Activated B cell treated with CpG ODN at 0.5 μM for 24 hours (primary cell): ENCODE measurements at regions of chr7 and their contacts with region 1.

Region 1: GRCh38 chr7:135170274-135170997 is at the start of gene CYREN:
- DNase-seq: peak; percentile 85
- ATAC-seq: peak; percentile 76
- H3K4me3 Mint-ChIP-seq: peak within 1 kb of the TSS; percentile 92
- H3K27ac Mint-ChIP-seq: peak within 1 kb of the TSS; percentile 95
- H3K4me1 Mint-ChIP-seq: peaks cover 59% of the 10 kb centered on the region
- H3K27me3 Mint-ChIP-seq: no peaks in the 10 kb centered on the region
- CTCF ChIP-seq: no peak
- total RNA-seq, gene CYREN: 78.2 and 79.3 TPM in 2 replicates

Region 2: GRCh38 chr7:134632937-134633540 is 537.4 kb before region 1 on chr7:
- CTCF ChIA-PET with region 1: interaction called, 13 read pairs
- POLR2A ChIA-PET with region 1: interaction called, 10 read pairs
- intact Hi-C with region 1: loop called (anchors 1 kb)
- DNase-seq: no peak
- ATAC-seq: peak; percentile 71
- H3K4me3 Mint-ChIP-seq: no peak overlapping the region
- H3K27ac Mint-ChIP-seq: no peak overlapping the region
- H3K4me1 Mint-ChIP-seq: peaks cover 10% of the 10 kb centered on the region
- H3K27me3 Mint-ChIP-seq: peaks cover 14% of the 10 kb centered on the region
- CTCF ChIP-seq: no peak

Region 3: DNA sequence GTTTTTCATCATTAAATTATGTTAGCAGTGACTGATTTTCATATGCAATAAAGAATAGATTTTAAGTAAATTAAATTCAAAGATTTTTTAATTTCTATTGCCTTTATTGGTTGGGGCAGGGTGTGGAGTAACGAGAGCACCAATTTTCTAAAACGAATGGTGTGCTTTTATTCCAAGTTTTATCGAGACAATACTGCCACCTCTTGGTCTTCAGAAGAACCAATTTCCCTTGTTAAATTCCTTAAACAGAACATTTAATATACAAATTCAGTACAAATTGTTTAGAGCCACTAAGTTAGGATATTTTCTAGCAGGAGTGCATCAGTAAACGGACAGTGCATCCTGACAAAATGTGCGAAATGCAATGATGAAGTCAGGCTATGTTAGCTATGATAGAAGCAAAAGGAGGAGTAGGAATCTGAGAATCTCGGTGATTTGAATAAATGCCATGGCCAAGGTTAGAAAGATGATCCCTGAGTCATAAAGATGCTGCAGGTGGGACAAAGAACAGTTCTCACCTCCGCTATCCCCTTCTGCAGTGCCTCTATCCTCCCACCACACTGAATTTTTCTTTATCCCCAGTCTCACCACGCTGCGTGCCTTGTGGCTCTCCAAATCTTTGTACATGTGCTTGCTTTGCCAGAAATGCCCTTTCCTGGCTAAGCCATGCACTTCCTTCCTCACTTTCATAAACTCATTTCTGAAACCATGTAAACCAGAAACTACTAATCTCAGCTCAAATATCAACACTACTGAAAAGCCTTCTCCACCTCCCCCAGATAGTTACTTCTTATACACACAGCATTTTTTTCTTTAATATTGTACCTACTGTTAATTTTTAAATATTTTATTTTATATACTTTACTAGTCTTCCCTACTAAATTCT is 216.0 kb before region 1 on chr7:
- CTCF ChIA-PET with region 1: interaction called, 5 read pairs
- POLR2A ChIA-PET with region 1: no interaction called
- intact Hi-C with region 1: loop called (anchors 1 kb)
- DNase-seq: no peak
- ATAC-seq: no peak
- H3K4me3 Mint-ChIP-seq: no peak overlapping the region
- H3K27ac Mint-ChIP-seq: no peak overlapping the region
- H3K4me1 Mint-ChIP-seq: no peaks in the 10 kb centered on the region
- H3K27me3 Mint-ChIP-seq: no peaks in the 10 kb centered on the region
- CTCF ChIP-seq: no peak

Region 4: DNA sequence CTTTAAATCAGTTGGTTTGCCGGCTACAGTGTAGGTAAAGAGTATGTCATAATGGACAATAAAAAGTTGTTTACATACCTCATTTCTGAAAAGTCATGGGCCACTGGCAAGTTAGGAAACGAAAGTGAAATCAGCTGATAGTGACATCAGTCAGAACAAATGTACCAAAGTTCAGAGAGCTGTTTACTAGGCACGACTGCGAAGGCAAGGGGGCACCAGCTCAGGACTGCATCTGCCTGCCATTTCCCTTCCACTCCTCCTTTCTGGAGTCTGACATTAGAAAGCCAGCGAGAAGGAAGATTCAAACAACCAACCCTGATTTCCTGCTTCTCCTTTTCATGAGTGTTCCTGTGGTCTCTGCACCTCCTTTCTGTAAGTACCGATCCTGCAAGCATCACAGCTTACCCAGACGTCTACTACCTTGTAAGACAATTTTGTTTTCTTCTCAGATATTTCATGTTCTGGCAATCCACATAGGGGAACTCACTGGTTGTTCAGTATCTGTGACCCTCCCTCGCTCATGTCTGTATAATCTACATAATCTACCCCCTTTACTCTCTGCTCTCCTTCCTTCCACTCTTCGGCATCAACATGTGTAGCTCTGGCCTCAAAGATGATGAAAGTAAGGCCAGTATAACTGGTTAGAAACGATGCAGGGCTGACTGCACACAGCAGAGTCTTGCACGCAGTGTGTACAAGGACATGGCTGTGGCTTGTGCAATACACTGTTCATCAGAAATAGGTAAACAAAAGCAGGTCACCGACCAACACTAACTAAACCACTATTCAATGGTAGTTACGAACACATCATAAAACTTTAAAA is 22.3 kb before region 1 on chr7 and contains the start of gene TMEM140:
- CTCF ChIA-PET with region 1: interaction called, 20 read pairs
- POLR2A ChIA-PET with region 1: interaction called, 111 read pairs
- intact Hi-C with region 1: loop called (anchors 1 kb)
- DNase-seq: no peak
- ATAC-seq: peak; percentile 72
- H3K4me3 Mint-ChIP-seq: peak within 1 kb of the TSS; percentile 83
- H3K27ac Mint-ChIP-seq: peak within 1 kb of the TSS; percentile 93
- H3K4me1 Mint-ChIP-seq: peaks cover 73% of the 10 kb centered on the region
- H3K27me3 Mint-ChIP-seq: no peaks in the 10 kb centered on the region
- CTCF ChIP-seq: no peak
- total RNA-seq, gene TMEM140: 18.6 and 20.9 TPM in 2 replicates

Region 5: GRCh38 chr7:135186841-135187253 is 16.4 kb after region 1 on chr7:
- CTCF ChIA-PET with region 1: interaction called, 22 read pairs
- POLR2A ChIA-PET with region 1: interaction called, 125 read pairs
- intact Hi-C with region 1: loop called (anchors 1 kb)
- DNase-seq: peak; percentile 60
- ATAC-seq: peak; percentile 76
- H3K4me3 Mint-ChIP-seq: peak overlapping the region; percentile 74
- H3K27ac Mint-ChIP-seq: peak overlapping the region; percentile 80
- H3K4me1 Mint-ChIP-seq: peaks cover 51% of the 10 kb centered on the region
- H3K27me3 Mint-ChIP-seq: no peaks in the 10 kb centered on the region
- CTCF ChIP-seq: no peak

Region 6: GRCh38 chr7:135274495-135275268 is 104.2 kb after region 1 on chr7:
- CTCF ChIA-PET with region 1: interaction called, 5 read pairs
- POLR2A ChIA-PET with region 1: no interaction called
- intact Hi-C with region 1: loop called (anchors 5 kb)
- DNase-seq: peak; percentile 49
- ATAC-seq: peak; percentile 96
- H3K4me3 Mint-ChIP-seq: no peak overlapping the region
- H3K27ac Mint-ChIP-seq: no peak overlapping the region
- H3K4me1 Mint-ChIP-seq: peaks cover 2% of the 10 kb centered on the region
- H3K27me3 Mint-ChIP-seq: peaks cover 6% of the 10 kb centered on the region
- CTCF ChIP-seq: peak; percentile 88

Region 7: GRCh38 chr7:135620980-135621850 is 450.8 kb after region 1 on chr7:
- CTCF ChIA-PET with region 1: no interaction called
- POLR2A ChIA-PET with region 1: no interaction called
- intact Hi-C with region 1: no loop called
- DNase-seq: no peak
- ATAC-seq: no peak
- H3K4me3 Mint-ChIP-seq: no peak overlapping the region
- H3K27ac Mint-ChIP-seq: no peak overlapping the region
- H3K4me1 Mint-ChIP-seq: no peaks in the 10 kb centered on the region
- H3K27me3 Mint-ChIP-seq: no peaks in the 10 kb centered on the region
- CTCF ChIP-seq: peak; percentile 80

Region 8: DNA sequence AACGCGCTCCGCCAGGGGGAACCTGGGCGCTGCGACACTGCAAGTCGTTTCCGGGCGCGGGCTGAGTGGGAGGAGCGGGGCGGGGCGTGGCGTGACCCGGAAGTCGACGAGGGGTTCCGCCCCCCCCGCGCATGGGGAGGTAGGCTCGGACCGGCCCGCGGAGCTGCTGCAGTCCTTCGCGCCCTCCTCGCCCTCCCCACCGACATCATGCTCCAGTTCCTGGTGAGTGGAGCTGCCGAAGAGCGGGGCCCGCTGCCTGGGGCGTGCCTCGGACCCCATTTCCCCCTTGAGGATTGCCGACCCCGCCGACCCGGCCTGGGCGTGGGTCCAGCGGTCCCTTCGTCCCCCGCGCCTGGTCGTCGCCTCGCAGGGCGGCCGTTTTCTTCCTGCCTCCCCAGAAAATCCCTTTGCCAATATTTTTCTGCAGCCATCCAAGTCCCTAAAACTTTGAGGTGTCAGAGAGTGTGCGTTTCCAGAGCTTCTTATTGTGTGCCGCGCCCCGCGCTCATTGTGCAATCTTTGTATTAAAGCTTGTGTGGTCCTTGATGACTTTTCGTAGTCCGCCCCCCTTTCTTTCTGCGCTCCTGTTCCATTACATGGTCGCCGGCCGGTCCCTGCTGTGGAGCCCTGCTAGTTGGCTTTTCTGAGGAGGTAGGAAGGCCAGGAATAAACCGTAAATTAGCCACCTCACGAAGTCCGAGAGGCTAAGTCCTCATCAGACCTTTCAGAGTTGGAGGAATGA is 492.1 kb after region 1 on chr7 and contains the start of gene STMP1:
- CTCF ChIA-PET with region 1: no interaction called
- POLR2A ChIA-PET with region 1: interaction called, 3 read pairs
- intact Hi-C with region 1: loop called (anchors 10 kb)
- DNase-seq: peak; percentile 96
- ATAC-seq: peak; percentile 98
- H3K4me3 Mint-ChIP-seq: peak within 1 kb of the TSS; percentile 91
- H3K27ac Mint-ChIP-seq: peak within 1 kb of the TSS; percentile 79
- H3K4me1 Mint-ChIP-seq: peaks cover 39% of the 10 kb centered on the region
- H3K27me3 Mint-ChIP-seq: no peaks in the 10 kb centered on the region
- CTCF ChIP-seq: no peak
- total RNA-seq, gene STMP1: 24.2 and 26.2 TPM in 2 replicates